WTC11 (cell line): ENCODE measurements at regions of chr5 and their contacts with region 1.

Region 1: DNA sequence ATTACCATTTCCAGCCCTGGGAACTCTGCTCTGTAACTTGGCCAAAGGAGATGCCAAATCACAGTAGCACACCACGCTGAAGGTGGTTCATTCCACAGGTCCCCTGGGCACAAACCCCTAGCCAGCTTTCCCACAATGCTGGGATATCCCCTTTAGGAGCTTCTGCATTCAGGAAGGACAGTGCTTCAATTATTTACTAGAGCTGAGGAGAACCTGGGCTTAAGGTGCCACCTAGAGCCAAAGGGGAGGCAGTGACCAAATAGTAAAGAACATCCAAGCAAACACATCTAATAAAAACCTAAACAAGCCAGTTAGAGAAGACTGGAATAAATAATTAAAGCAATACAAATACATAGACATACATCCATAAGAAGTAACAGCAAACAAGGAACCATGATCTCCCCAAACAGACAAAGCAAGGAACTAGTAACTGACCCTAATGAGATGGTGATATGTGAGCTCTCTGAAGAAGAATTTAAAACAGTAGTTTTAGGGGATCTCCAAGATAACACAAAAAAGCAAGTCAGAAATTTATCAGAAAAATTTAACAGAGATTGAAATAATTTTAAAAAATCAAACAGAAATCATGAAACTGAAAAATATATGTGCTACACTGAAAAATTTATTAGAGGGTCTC is 14.6 kb downstream of the KIF4B start:
- DNase-seq: no peak
- ATAC-seq: peak; percentile 88
- H3K4me3 Mint-ChIP-seq: no peak overlapping the region
- H3K27ac Mint-ChIP-seq: no peak overlapping the region
- H3K4me1 Mint-ChIP-seq: peaks cover 12% of the 10 kb centered on the region
- H3K27me3 Mint-ChIP-seq: peaks cover 3% of the 10 kb centered on the region; the same call in 1 of the 2 replicates
- CTCF ChIP-seq: no peak

Region 2: DNA sequence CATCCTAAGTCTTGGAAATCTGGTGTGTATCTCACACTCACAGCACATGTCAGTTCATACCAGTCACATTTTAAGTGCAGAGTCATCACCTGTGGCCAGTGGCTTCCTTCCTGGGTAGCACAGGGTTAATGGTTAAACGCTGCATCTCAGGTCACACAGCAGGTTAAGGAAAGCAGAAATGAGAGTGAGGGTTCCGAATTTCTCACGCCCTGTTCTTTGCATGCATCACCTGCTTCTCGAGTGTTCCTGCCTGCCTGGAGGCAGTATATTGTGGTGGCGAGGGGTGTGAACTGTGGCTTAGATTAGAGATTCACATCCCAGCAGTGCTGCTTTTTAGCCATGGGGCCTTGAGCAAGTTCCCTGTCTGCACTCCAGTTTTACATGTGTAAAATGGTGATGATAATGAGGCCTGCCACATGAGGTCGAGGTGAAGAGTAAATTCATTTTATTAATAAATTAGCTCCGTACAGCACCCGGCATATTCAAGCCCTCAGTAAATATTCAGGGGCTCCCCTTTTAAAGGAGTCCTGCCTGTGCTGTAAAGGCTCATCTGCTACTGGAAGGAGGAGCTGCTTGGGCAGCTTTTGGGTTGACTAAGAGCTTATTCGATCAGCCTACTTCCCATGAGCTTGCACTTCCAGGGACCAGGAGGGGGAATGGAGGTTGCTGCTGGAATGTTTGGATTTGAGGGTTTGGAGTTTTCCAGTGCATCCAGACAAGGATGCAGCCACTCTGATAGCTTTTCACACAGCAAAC is 643.5 kb before region 1 on chr5:
- CTCF ChIA-PET with region 1: no interaction called
- POLR2A ChIA-PET with region 1: no interaction called
- DNase-seq: no peak
- ATAC-seq: peak; percentile 25
- H3K4me3 Mint-ChIP-seq: no peak overlapping the region
- H3K27ac Mint-ChIP-seq: peak overlapping the region; percentile 69; the same call in 1 of the 2 replicates
- H3K4me1 Mint-ChIP-seq: peaks cover 12% of the 10 kb centered on the region
- H3K27me3 Mint-ChIP-seq: no peaks in the 10 kb centered on the region
- CTCF ChIP-seq: no peak

Region 3: GRCh38 chr5:154972476-154973080 is 55.5 kb before region 1 on chr5:
- CTCF ChIA-PET with region 1: interaction called, 63 read pairs
- POLR2A ChIA-PET with region 1: no interaction called
- DNase-seq: peak; percentile 32
- ATAC-seq: peak; percentile 75
- H3K4me3 Mint-ChIP-seq: no peak overlapping the region
- H3K27ac Mint-ChIP-seq: no peak overlapping the region
- H3K4me1 Mint-ChIP-seq: no peaks in the 10 kb centered on the region
- H3K27me3 Mint-ChIP-seq: no peaks in the 10 kb centered on the region
- CTCF ChIP-seq: peak; percentile 34; the same call in 1 of the 2 replicates

Region 4: GRCh38 chr5:154995679-154996078 is 32.4 kb before region 1 on chr5:
- CTCF ChIA-PET with region 1: interaction called, 24 read pairs
- POLR2A ChIA-PET with region 1: no interaction called
- DNase-seq: peak; percentile 46
- ATAC-seq: peak; percentile 100
- H3K4me3 Mint-ChIP-seq: no peak overlapping the region
- H3K27ac Mint-ChIP-seq: no peak overlapping the region
- H3K4me1 Mint-ChIP-seq: no peaks in the 10 kb centered on the region
- H3K27me3 Mint-ChIP-seq: no peaks in the 10 kb centered on the region
- CTCF ChIP-seq: no peak

Region 5: GRCh38 chr5:155004138-155004744 is 23.9 kb before region 1 on chr5:
- CTCF ChIA-PET with region 1: interaction called, 38 read pairs
- POLR2A ChIA-PET with region 1: no interaction called
- DNase-seq: peak; percentile 69
- ATAC-seq: peak; percentile 96
- H3K4me3 Mint-ChIP-seq: no peak overlapping the region
- H3K27ac Mint-ChIP-seq: no peak overlapping the region
- H3K4me1 Mint-ChIP-seq: 0 out of 2 replicates have a peak, but pooled peaks cover 7% of the 10 kb centered on the region
- H3K27me3 Mint-ChIP-seq: no peaks in the 10 kb centered on the region; the same call in none of the 2 replicates
- CTCF ChIP-seq: no peak

Region 6: GRCh38 chr5:155017610-155018009 is 10.5 kb before region 1 on chr5:
- CTCF ChIA-PET with region 1: interaction called, 12 read pairs
- POLR2A ChIA-PET with region 1: interaction called, 3 read pairs
- DNase-seq: no peak
- ATAC-seq: no peak
- H3K4me3 Mint-ChIP-seq: no peak overlapping the region
- H3K27ac Mint-ChIP-seq: no peak overlapping the region
- H3K4me1 Mint-ChIP-seq: no peaks in the 10 kb centered on the region
- H3K27me3 Mint-ChIP-seq: peaks cover 16% of the 10 kb centered on the region
- CTCF ChIP-seq: no peak

Region 7: GRCh38 chr5:155260798-155261197 is 232.7 kb after region 1 on chr5:
- CTCF ChIA-PET with region 1: interaction called, 11 read pairs
- POLR2A ChIA-PET with region 1: no interaction called
- DNase-seq: peak; percentile 49
- ATAC-seq: peak; percentile 97
- H3K4me3 Mint-ChIP-seq: no peak overlapping the region
- H3K27ac Mint-ChIP-seq: no peak overlapping the region
- H3K4me1 Mint-ChIP-seq: 0 out of 2 replicates have a peak, but pooled peaks cover 3% of the 10 kb centered on the region
- H3K27me3 Mint-ChIP-seq: no peaks in the 10 kb centered on the region
- CTCF ChIP-seq: 0 out of 2 replicates have a peak, but pooled peaks have one; percentile 22